WTC11 (cell line): ENCODE measurements at regions of chr2 and their contacts with region 1.

Region 1: GRCh38 chr2:10043906-10044601 is 704 bp downstream of the KLF11 start:
- DNase-seq: peak; percentile 95
- ATAC-seq: peak; percentile 63
- H3K4me3 Mint-ChIP-seq: peak overlapping the region; percentile 49
- H3K27ac Mint-ChIP-seq: no peak overlapping the region
- H3K4me1 Mint-ChIP-seq: peaks cover 10% of the 10 kb centered on the region
- H3K27me3 Mint-ChIP-seq: peaks cover 38% of the 10 kb centered on the region
- CTCF ChIP-seq: no peak

Region 2: GRCh38 chr2:9152975-9153642 is 890.9 kb before region 1 on chr2:
- CTCF ChIA-PET with region 1: no interaction called
- POLR2A ChIA-PET with region 1: no interaction called
- DNase-seq: no peak
- ATAC-seq: peak; percentile 26; the same call in 1 of the 2 replicates
- H3K4me3 Mint-ChIP-seq: no peak overlapping the region
- H3K27ac Mint-ChIP-seq: no peak overlapping the region
- H3K4me1 Mint-ChIP-seq: peaks cover 10% of the 10 kb centered on the region
- H3K27me3 Mint-ChIP-seq: no peaks in the 10 kb centered on the region
- CTCF ChIP-seq: no peak

Region 3: DNA sequence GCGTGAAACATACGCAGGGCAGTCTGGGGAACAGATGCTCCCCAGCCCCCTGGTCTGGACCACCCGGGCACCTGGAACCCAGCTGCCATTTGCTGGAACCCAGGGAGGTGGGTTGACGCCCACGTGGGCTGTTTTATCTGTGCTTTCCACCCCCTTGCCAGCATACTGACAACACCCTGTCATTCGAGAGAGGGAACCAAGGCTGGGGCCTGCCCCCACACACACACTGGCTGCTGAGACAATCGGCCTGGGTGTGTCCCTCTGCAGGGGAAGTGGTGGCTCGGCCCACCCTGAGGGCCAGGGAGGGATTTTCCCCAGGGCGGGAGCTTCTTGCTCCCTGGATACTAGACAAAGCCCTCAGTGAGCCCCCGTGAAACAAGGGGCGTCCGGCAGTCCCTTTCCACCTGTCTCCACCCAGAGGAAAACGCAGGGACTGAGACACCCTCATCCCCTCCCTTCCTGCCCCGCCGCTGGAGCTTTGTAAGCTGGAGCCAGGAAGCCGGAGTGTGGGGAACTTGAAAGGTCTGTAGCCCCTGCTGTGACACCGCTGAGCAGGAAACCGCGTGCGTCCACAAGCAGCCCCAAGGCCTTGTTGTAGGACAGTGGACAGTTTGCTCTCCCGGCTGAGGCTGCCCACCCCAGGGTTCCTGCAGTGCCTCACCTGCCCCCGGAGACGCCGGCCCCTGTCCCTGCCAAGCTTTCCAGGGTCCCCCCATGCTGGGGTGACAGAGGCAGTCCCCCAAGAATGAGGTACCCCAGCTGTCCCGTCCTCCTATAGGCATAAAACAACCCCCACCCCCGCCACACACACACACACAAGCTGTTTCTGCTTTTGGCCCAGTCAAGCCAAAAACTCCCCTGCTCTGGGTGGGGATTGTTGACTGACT is 14.8 kb before region 1 on chr2:
- CTCF ChIA-PET with region 1: interaction called, 20 read pairs
- POLR2A ChIA-PET with region 1: interaction called, 5 read pairs
- DNase-seq: peak; percentile 52
- ATAC-seq: peak; percentile 69
- H3K4me3 Mint-ChIP-seq: no peak overlapping the region
- H3K27ac Mint-ChIP-seq: no peak overlapping the region
- H3K4me1 Mint-ChIP-seq: peaks cover 19% of the 10 kb centered on the region
- H3K27me3 Mint-ChIP-seq: no peaks in the 10 kb centered on the region
- CTCF ChIP-seq: no peak

Region 4: GRCh38 chr2:10057231-10058107 is 13.4 kb after region 1 on chr2:
- CTCF ChIA-PET with region 1: interaction called, 27 read pairs
- POLR2A ChIA-PET with region 1: interaction called, 5 read pairs
- DNase-seq: peak; percentile 92
- ATAC-seq: peak; percentile 94
- H3K4me3 Mint-ChIP-seq: peak overlapping the region; percentile 85
- H3K27ac Mint-ChIP-seq: peak overlapping the region; percentile 98
- H3K4me1 Mint-ChIP-seq: peaks cover 28% of the 10 kb centered on the region
- H3K27me3 Mint-ChIP-seq: no peaks in the 10 kb centered on the region
- CTCF ChIP-seq: no peak